GM12878 (cell line): ENCODE measurements at regions of chr12 and their contacts with region 1.

Region 1: DNA sequence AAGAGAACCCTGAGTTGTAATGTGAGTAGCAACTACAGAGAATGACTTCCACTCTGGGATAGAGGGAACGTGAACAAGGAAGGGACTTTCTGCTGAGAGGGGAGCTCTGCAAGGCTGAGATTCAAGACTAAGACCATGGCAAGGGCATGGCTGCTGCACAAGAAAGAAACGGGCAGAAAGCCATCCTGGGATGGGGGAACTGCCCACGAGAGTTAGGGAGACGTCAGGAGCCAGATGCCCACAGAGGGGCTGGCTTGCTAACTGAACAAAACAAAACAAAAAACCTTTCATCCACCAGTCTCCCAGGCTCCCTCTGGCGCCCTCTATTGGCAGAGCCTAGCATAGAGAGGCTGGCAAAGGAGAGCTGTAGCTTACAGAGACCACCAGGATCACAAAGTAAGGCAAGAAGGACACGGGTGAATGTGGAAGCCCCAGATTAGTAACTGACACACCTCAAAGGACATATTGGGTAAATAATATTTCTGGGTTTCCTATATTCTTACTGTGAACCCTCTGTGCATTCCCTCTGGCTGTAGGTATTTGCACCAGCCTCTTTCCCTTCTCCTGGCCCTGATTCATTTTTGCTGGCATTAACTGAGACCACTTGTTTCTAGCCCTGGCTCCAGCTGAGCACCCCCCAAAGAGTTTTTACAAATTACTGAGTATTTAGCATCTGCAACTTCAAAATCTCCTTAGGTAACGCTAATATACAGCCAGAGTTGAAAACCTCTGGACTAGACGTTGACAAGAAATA is 338.3 kb downstream of the EMP1 start:
- DNase-seq: no peak
- ATAC-seq: peak; percentile 35
- H3K4me3 ChIP-seq: no peak overlapping the region
- H3K27ac ChIP-seq: no peak overlapping the region
- H3K4me1 ChIP-seq: peaks cover 21% of the 10 kb centered on the region
- H3K27me3 ChIP-seq: peaks cover 0 to 3% of the 10 kb centered on the region in 2 experiments; a peak in 1 of 4 replicates
- CTCF ChIP-seq: peak; percentile 64 to 95 (median 89)
- EP300 ChIP-seq: no peak
- POLR2A ChIP-seq: no peak
- RAD21 ChIP-seq: peak; percentile 65

Region 2: DNA sequence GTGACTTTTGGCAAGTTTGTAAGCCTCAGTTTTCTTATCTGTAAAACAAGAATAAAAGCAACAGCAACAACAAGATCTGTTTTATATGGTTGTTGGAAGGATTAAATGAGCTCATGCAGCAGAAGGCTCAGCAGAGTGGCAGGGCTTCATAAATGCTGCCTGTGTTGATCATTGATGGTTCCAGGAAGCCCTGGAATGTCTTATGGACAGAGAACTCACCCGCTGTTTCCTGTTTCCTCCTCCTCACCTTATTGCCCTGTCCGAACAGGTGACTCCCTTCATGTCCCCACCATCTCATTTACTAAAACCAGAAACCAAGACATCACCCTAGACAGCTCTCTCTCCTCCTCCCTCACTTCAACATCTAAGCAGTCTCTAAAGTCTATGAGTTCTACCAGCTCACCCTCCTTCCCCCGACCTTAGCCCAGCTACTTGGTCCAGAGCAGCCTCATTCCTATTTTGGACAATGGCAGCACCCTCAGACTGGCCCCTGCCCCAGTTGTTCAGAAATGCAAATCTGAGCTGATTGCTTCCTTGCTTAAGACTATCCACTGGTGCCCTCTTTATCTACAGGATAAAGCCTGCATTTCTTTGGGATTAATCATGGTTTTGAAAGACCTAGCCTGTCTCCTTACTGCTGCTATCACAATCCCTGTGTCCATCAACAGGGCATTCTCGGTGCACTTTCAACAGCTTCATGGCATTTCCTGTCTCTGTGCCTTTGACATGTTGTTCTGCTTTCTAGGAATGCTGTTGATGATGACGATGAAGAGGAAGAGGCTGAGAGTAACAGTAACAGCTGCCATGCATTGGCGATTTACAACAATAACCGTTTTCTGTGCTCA is 409.9 kb before region 1 on chr12:
- CTCF ChIA-PET with region 1: no interaction called
- POLR2A ChIA-PET with region 1: no interaction called
- RAD21 ChIA-PET with region 1: no interaction called
- SMC1A ChIA-PET with region 1: no interaction called
- in situ Hi-C with region 1: no loop called
- intact Hi-C with region 1: no loop called
- DNase-seq: no peak
- ATAC-seq: no peak
- H3K4me3 ChIP-seq: no peak overlapping the region
- H3K27ac ChIP-seq: no peak overlapping the region
- H3K4me1 ChIP-seq: no peaks in the 10 kb centered on the region
- H3K27me3 ChIP-seq: peaks cover 0 to 7% of the 10 kb centered on the region in 2 experiments; a peak in 2 of 4 replicates
- CTCF ChIP-seq: no peak
- EP300 ChIP-seq: no peak
- POLR2A ChIP-seq: no peak
- RAD21 ChIP-seq: no peak

Region 3: DNA sequence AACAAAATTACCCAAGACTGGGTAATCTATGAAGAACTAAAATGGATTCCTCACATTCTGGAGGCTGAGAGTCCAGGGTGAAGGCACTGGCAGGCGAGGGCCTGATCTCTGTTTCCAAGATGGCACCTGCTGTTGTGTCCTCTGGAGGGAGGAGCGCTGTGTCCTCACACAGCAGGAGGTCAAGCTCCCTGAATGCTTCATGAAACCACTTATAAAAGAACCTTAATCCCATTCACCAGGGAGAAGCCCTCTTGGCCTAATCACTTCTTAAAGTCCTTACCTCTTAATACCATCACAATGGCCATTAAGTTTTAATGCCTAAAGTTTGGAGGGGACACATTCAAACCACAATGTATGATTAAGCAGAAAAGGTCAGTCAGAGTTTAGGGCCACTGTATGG is 165.9 kb before region 1 on chr12:
- CTCF ChIA-PET with region 1: interaction called, 10 read pairs
- POLR2A ChIA-PET with region 1: no interaction called
- RAD21 ChIA-PET with region 1: interaction called, 7 read pairs
- SMC1A ChIA-PET with region 1: no interaction called
- in situ Hi-C with region 1: no loop called
- intact Hi-C with region 1: no loop called
- DNase-seq: no peak
- ATAC-seq: no peak
- H3K4me3 ChIP-seq: no peak overlapping the region
- H3K27ac ChIP-seq: no peak overlapping the region
- H3K4me1 ChIP-seq: no peaks in the 10 kb centered on the region
- H3K27me3 ChIP-seq: no peaks in the 10 kb centered on the region
- CTCF ChIP-seq: no peak
- EP300 ChIP-seq: no peak
- POLR2A ChIP-seq: no peak
- RAD21 ChIP-seq: no peak

Region 4: DNA sequence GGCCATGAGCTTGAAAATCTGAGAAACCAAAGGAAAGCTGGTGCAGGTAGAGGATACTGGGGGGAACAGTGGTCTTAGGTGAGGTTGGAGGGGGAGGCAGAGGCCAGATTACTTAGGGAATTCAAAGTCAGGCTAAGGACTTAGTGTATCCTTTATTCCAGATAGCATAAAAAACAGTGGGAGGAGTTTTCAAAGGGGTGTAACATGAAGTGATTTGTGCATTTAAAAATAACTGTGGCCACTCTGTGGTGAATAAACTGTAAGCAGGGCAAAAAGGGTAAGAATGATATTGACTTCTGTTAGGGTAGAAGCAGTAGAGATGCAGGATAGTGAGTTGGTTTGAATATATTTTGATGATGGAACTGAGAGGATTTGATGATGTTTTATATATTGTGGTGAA is 25.1 kb before region 1 on chr12:
- CTCF ChIA-PET with region 1: interaction called, 13 read pairs
- POLR2A ChIA-PET with region 1: no interaction called
- RAD21 ChIA-PET with region 1: interaction called, 4 read pairs
- SMC1A ChIA-PET with region 1: interaction called, 4 read pairs
- in situ Hi-C with region 1: no loop called
- intact Hi-C with region 1: no loop called
- DNase-seq: no peak
- ATAC-seq: no peak
- H3K4me3 ChIP-seq: no peak overlapping the region
- H3K27ac ChIP-seq: no peak overlapping the region
- H3K4me1 ChIP-seq: no peaks in the 10 kb centered on the region
- H3K27me3 ChIP-seq: no peaks in the 10 kb centered on the region
- CTCF ChIP-seq: no peak
- EP300 ChIP-seq: no peak
- POLR2A ChIP-seq: no peak
- RAD21 ChIP-seq: no peak

Region 5: DNA sequence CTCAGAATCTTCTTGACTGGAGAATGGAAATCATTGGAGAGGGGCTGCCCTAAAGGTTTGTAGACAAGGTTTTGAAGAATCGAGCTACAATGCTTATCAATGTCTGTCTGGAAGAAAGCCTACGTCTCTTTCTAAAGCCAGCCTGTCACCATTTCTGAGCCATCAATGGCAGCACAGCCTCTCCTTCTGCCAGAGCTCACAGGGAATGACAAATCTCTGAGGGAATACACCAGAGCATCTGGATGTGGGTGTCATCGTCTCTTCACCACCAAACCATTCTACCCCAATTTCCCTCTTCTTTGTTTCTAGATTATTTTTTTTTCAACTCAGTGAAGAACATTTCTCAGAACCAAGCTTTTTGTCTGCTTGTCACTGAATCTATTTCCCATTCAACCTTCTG is 11.4 kb after region 1 on chr12:
- CTCF ChIA-PET with region 1: interaction called, 45 read pairs
- POLR2A ChIA-PET with region 1: interaction called, 3 read pairs
- RAD21 ChIA-PET with region 1: interaction called, 5 read pairs
- SMC1A ChIA-PET with region 1: interaction called, 10 read pairs
- in situ Hi-C with region 1: no loop called
- intact Hi-C with region 1: no loop called
- DNase-seq: no peak
- ATAC-seq: no peak
- H3K4me3 ChIP-seq: no peak overlapping the region
- H3K27ac ChIP-seq: no peak overlapping the region
- H3K4me1 ChIP-seq: no peaks in the 10 kb centered on the region
- H3K27me3 ChIP-seq: peaks cover 0 to 2% of the 10 kb centered on the region in 2 experiments; a peak in 2 of 4 replicates
- CTCF ChIP-seq: no peak
- EP300 ChIP-seq: no peak
- POLR2A ChIP-seq: no peak
- RAD21 ChIP-seq: no peak

Region 6: DNA sequence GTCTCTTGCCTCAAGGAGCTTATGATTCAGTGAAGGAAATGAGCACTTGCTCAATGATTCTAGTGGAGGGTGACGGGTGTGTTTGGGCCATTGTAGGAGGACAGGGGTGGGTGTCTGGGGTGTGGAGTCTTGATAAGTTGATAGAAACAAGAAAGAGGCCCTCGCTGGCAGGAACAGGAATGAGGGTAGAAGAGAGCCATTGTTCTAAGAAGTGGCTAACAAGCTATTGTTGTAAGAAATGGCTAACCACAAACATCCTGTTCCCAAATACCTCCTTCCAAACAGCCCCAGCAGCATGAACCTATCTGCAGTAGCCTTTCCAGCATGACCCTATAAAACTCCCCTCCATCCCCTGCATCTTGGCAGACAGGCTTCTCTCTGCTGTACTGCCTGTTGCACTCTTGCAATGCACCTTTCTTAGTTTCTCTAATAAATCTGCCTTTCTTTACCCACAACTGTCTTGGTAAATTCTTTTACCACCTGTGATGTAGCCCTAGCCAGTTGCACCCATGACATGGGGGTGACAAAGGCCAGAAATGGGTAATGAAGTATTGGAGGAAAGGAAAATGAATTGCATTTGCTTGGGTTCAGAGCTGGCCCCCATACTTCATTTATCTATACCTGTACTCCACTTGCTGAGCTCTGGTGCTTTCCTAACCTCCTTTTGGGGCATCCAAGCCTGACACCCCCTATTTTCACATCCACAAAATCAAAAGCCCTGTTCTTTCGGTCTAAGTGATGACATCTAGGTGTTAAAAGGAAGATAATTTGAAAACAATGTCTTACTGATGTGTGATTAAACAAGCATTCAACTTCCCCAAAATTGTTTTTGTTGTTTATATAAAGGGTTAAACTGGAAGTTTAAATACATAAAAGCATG is 57.5 kb after region 1 on chr12:
- CTCF ChIA-PET with region 1: interaction called, 71 read pairs
- POLR2A ChIA-PET with region 1: interaction called, 12 read pairs
- RAD21 ChIA-PET with region 1: interaction called, 72 read pairs
- SMC1A ChIA-PET with region 1: interaction called, 88 read pairs
- in situ Hi-C with region 1: no loop called
- intact Hi-C with region 1: loop called (anchors 1 kb)
- DNase-seq: peak; percentile 51
- ATAC-seq: peak; percentile 86
- H3K4me3 ChIP-seq: no peak overlapping the region
- H3K27ac ChIP-seq: no peak overlapping the region; the same call in 1 of the 2 replicates
- H3K4me1 ChIP-seq: no peaks in the 10 kb centered on the region; the same call in 1 of the 2 replicates
- H3K27me3 ChIP-seq: no peaks in the 10 kb centered on the region
- CTCF ChIP-seq: no peak
- EP300 ChIP-seq: peak; percentile 72 to 81; a peak in 3 of 4 replicates
- POLR2A ChIP-seq: no peak
- RAD21 ChIP-seq: no peak

Region 7: DNA sequence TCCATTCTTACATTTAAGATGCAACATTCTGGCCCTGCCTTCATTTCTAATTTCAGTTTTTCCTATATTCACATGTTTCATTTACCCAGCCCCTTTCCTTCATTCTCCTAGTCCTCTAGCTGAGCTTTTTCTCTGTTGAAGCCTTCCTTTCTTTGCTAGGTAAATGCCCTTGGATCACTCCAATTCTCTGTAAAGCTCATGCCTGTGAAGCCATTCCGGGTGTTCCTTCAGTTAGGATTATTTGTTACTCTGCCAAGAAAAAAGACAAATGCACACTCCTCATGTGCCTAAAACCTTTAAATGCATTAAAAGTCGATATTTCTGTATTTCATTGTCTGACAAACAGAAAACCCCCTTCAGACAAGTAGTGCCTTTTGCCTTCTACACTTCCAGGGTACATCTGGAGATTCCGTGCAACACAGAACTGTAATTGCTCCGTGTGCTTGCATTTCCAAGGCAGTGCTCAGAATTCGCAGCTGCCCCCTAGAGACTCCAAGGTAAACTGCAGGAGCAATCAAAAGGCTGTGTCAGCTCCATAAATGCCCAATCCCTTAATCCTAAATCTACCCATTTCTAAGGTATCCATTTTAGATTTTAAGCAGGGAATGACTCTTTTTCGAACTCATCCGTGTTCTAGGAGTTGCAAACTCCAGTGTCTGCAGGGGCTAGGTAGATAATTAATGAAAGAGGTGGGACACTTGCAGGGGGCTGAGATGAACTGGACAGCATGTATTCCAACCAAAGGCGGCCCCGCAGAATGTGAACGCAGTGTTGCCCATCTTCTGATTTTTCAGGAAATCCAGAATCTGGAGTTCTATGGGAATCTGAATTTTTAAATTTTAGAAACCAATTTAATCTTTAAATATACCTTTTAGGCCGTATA is 126.4 kb after region 1 on chr12:
- CTCF ChIA-PET with region 1: interaction called, 66 read pairs
- POLR2A ChIA-PET with region 1: no interaction called
- RAD21 ChIA-PET with region 1: interaction called, 29 read pairs
- SMC1A ChIA-PET with region 1: interaction called, 33 read pairs
- in situ Hi-C with region 1: no loop called
- intact Hi-C with region 1: loop called (anchors 1 kb)
- DNase-seq: peak; percentile 3
- ATAC-seq: peak; percentile 93
- H3K4me3 ChIP-seq: no peak overlapping the region
- H3K27ac ChIP-seq: no peak overlapping the region
- H3K4me1 ChIP-seq: no peaks in the 10 kb centered on the region
- H3K27me3 ChIP-seq: 0 out of 4 replicates have a peak, but pooled peaks cover 0 to 4% of the 10 kb centered on the region in 2 experiments
- CTCF ChIP-seq: peak; percentile 82 to 88 (median 83)
- EP300 ChIP-seq: no peak
- POLR2A ChIP-seq: no peak
- RAD21 ChIP-seq: peak; percentile 80

Region 8: GRCh38 chr12:15208125-15208524 is 1673.3 kb after region 1 on chr12:
- CTCF ChIA-PET with region 1: no interaction called
- POLR2A ChIA-PET with region 1: no interaction called
- RAD21 ChIA-PET with region 1: no interaction called
- SMC1A ChIA-PET with region 1: no interaction called
- in situ Hi-C with region 1: no loop called
- intact Hi-C with region 1: no loop called
- DNase-seq: no peak
- ATAC-seq: no peak
- H3K4me3 ChIP-seq: no peak overlapping the region
- H3K27ac ChIP-seq: no peak overlapping the region
- H3K4me1 ChIP-seq: no peaks in the 10 kb centered on the region
- H3K27me3 ChIP-seq: no peaks in the 10 kb centered on the region
- CTCF ChIP-seq: no peak
- EP300 ChIP-seq: no peak
- POLR2A ChIP-seq: no peak
- RAD21 ChIP-seq: no peak